Activated T-helper 2 cell treated with anti-CD3 and anti-CD28 coated beads, Interferon-gamma antibody, Interleukin-2, Interleukin-4, amounts not matched to agents 10 μg/mL and 5 μg/mL and 100 μg/mL, durations not matched to agents 14 hours and 24 hours and 36 hours (primary cell): ENCODE measurements at regions of chr13 and their contacts with region 1.

Region 1: GRCh38 chr13:29850224-29850898 is at the start of gene UBL3:
- DNase-seq: peak; percentile 90
- H3K4me3 Mint-ChIP-seq: peak within 1 kb of the TSS; percentile 96
- H3K27ac Mint-ChIP-seq: peak within 1 kb of the TSS; percentile 99
- H3K4me1 Mint-ChIP-seq: peaks cover 44% of the 10 kb centered on the region
- H3K27me3 Mint-ChIP-seq: no peaks in the 10 kb centered on the region
- total RNA-seq, gene UBL3: 7.9 and 8.5 TPM in 2 replicates

Region 2: DNA sequence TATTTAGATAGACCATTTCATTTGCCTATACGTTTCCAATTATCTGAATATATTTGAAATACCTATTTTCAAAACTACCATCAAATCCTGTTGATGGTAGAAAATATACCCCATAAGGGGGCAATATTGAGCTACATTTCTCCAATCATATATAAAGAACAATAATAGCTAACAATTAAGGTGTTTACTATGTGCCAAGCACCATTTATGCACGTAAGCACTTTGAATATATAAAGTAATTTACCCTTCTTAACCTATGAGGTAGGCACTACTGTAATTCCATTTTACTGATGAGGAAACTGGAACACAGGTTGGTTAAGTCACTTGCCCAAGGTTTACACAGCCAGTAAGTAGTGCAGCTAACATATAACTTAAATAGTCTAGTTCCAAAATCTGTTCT is 79.1 kb before region 1 on chr13:
- intact Hi-C with region 1: loop called (anchors 5 kb)
- DNase-seq: no peak
- H3K4me3 Mint-ChIP-seq: no peak overlapping the region
- H3K27ac Mint-ChIP-seq: no peak overlapping the region
- H3K4me1 Mint-ChIP-seq: peaks cover 2% of the 10 kb centered on the region
- H3K27me3 Mint-ChIP-seq: no peaks in the 10 kb centered on the region

Region 3: GRCh38 chr13:29935309-29935981 is 85.1 kb after region 1 on chr13:
- intact Hi-C with region 1: loop called (anchors 1 kb)
- DNase-seq: peak; percentile 81
- H3K4me3 Mint-ChIP-seq: peak overlapping the region; percentile 67
- H3K27ac Mint-ChIP-seq: peak overlapping the region; percentile 56
- H3K4me1 Mint-ChIP-seq: peaks cover 42% of the 10 kb centered on the region
- H3K27me3 Mint-ChIP-seq: peaks cover 5% of the 10 kb centered on the region

Region 4: DNA sequence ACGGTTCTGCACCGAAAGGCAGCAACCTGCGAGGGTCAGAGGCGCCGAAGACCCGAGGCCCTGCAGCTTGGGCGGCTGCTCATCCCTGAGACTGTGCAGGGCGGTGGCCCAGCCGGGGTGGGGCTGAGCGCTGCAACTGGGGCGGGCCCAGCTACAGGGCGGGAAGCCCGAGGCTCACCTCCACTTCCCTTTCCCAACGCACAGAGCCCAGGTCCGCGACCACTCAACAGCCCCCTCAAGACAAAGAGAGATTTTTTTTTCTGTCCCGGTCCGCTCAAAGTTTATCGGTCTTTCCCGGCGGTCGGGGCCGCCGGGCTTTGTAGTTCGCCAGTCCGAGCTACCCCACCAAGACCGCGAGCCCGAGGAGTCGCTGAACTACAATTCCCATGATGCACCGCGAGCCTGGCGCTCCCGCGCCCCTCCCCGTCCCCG is 456.4 kb after region 1 on chr13:
- intact Hi-C with region 1: loop called (anchors 10 kb)
- DNase-seq: peak; percentile 88
- H3K4me3 Mint-ChIP-seq: peak overlapping the region; percentile 86
- H3K27ac Mint-ChIP-seq: peak overlapping the region; percentile 80
- H3K4me1 Mint-ChIP-seq: peaks cover 38% of the 10 kb centered on the region
- H3K27me3 Mint-ChIP-seq: no peaks in the 10 kb centered on the region